ENCODE measurements at regions of chr7 and their contacts with region 1.

Region 1: DNA sequence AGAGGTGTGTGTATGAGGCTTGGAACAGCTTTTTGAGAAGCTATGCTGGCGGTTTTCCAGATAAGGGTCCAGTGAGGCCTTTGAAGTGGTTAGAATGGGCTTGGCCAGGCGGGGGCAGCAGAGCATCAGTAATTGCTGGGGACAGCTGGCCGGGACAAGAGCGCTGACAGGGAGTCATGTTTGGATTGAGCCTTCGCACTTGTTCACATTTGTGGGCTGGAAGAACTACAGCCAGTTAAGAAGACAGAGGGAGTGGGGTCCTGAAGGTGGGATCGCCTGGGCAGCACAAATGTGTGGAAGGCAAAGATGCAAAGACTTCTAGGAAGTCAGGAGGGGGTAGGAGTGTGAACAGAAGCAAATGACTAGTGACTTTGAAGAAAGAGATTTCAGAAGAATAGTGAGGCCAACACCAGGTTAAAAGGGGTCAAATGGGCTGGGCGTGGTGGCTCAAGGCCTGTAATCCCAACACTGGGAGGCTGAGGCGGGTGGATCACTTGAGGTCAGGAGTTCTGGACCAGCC is 12.7 kb upstream of the SDHAF3 start:
- DNase-seq: peak; percentile 88 to 92
- H3K4me3 ChIP-seq: no peak overlapping the region
- H3K27ac ChIP-seq: no peak overlapping the region
- H3K4me1 ChIP-seq: peaks cover 6 to 7% (median 6%) of the 10 kb centered on the region in 4 donors
- H3K27me3 ChIP-seq: no peaks in the 10 kb centered on the region
- CTCF ChIP-seq: peak in 5 of 7 experiments; percentile 60 to 81 (median 74)
- EP300 ChIP-seq: no peak
- POLR2A ChIP-seq: no peak

Region 2: DNA sequence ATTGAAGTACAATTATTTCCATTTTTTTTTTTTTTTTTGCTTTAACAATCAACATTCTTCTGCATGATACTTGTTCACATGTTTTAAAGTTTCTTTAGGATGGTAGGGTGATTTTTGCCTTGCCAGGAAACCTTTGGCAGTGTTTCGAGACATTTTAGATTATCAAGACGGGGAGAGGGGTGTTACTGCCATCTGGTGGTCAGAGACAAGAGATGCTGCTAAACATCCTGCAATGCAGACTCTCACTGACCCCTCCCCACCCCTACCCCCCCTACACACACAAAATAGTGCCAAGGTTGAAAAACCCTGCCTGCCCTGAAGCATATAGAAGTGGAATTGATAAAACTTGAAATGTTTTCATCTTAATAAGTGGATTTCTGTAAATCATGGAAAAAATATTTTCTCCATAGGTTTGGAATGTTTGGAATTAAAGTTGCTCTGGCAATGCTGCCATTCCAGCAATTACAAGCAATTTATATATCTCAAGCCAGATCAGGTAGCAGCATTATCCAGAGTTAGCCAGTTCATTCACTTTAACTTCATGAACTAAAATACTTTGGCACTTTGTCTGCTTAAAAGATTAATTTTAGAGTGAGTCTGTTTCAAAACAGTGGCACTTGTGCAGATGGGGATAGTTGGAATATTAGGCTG is 74.8 kb after region 1 on chr7:
- intact Hi-C with region 1: loop called (anchors 5 kb)
- DNase-seq: peak; percentile 42 to 82
- H3K4me3 ChIP-seq: no peak overlapping the region
- H3K27ac ChIP-seq: no peak overlapping the region
- H3K4me1 ChIP-seq: peaks cover 0 to 7% (median 0%) of the 10 kb centered on the region in 4 donors
- H3K27me3 ChIP-seq: no peaks in the 10 kb centered on the region
- CTCF ChIP-seq: peak in 5 of 7 experiments; percentile 9 to 72 (median 71)
- EP300 ChIP-seq: no peak
- POLR2A ChIP-seq: no peak

Region 3: GRCh38 chr7:97844032-97844431 is 739.3 kb after region 1 on chr7:
- intact Hi-C with region 1: loop called (anchors 5 kb)
- DNase-seq: no peak
- H3K4me3 ChIP-seq: no peak overlapping the region
- H3K27ac ChIP-seq: no peak overlapping the region
- H3K4me1 ChIP-seq: no peaks in the 10 kb centered on the region
- H3K27me3 ChIP-seq: peaks cover 0 to 8% (median 2%) of the 10 kb centered on the region in 3 donors
- CTCF ChIP-seq: no peak
- EP300 ChIP-seq: no peak
- POLR2A ChIP-seq: no peak

Measured in stomach (tissue), 19 donors.